ENCODE measurements at regions of chr2 and their contacts with region 1.

Region 1: GRCh38 chr2:217756375-217757107 is 246.3 kb downstream of the TNS1 start:
- DNase-seq: peak; percentile 44
- H3K4me3 Mint-ChIP-seq: peak overlapping the region; percentile 33
- H3K27ac Mint-ChIP-seq: no peak overlapping the region
- H3K4me1 Mint-ChIP-seq: peaks cover 20% of the 10 kb centered on the region
- H3K27me3 Mint-ChIP-seq: no peaks in the 10 kb centered on the region

Region 2: DNA sequence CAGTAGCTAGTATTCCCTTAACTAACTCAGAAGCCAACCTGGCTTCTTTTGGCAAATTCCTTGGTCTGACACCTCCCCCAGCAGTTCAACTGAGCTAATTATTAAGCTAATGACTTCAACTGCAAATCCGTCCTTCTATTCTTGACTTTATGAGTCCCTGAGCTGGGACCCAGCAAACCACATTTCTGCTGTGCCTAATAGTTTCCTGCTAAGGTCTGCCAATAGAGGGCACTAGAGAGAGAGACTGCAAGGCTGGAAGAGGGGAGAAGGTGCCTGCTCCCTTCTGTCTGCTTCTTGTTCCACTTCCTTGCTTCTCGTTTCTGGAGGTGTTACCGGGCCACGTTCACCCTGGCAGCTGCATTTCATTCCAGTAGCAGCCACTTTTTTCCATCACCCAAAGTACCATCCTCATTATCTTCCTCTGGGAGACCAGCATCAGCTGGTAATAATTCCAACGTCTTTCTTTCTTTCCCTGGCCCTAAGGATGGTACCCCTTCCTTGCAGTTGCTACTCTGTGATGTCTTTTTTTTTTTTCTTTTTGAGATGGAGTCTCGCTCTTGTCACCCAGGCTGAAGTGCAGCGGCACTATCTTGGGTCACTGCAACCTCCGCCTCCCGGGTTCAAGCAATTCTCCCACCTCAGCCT is 105.7 kb before region 1 on chr2:
- intact Hi-C with region 1: loop called (anchors 5 kb)
- DNase-seq: no peak
- H3K4me3 Mint-ChIP-seq: no peak overlapping the region
- H3K27ac Mint-ChIP-seq: no peak overlapping the region
- H3K4me1 Mint-ChIP-seq: no peaks in the 10 kb centered on the region
- H3K27me3 Mint-ChIP-seq: peaks cover 6% of the 10 kb centered on the region